Posterior vena cava (tissue), 2 donors: ENCODE measurements at regions of chr6 and their contacts with region 1.

Region 1: DNA sequence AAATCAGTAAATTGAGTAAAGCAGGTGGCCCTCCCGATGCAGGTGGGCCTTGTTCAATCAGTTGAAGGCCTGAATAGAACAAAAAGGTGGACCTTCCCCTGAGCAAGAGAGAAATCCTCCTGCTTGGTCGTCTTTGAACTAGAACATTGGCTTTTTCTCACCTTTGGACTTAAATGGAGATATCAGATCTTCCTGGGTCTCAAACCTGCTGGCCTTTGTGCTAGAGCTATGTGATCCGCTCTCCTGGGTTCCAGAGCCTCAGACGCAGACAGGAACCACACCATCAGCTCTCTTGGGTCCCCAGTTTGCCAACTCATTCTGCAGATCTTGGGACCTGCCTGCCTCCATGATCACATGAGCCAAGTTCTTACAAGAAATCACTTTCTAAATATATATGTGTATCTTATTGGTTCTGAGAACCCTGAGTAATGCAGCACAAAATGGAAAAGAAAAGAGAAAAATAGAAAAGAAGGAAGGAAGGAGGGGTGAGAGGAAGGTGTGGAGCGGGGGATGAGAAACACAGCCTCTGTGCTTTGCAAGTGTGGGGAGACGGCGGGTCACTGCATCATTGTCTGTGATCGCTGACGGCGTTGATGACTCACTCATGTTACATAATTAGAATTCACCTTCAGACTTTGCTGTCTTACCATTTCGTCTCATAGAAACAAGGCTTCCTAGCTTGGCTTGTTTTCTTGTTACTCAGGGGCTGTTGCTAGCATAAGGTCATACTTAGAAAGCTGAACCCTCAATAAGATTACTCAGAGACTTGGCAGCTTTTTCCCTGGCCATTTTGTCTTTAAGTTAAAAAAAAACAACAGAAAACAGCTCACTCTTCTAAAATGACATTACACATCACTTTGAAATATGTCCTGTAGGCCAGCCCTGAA is 85.7 kb upstream of the NEDD9 start:
- DNase-seq: peak; percentile 90

Region 2: GRCh38 chr6:11241154-11241792 is 76.9 kb before region 1 on chr6:
- intact Hi-C with region 1: no loop called
- DNase-seq: no peak

Region 3: GRCh38 chr6:11251541-11252360 is 66.4 kb before region 1 on chr6:
- intact Hi-C with region 1: loop called (anchors 10 kb)
- DNase-seq: no peak